ENCODE measurements at regions of chr1 and their contacts with region 1.

Region 1: DNA sequence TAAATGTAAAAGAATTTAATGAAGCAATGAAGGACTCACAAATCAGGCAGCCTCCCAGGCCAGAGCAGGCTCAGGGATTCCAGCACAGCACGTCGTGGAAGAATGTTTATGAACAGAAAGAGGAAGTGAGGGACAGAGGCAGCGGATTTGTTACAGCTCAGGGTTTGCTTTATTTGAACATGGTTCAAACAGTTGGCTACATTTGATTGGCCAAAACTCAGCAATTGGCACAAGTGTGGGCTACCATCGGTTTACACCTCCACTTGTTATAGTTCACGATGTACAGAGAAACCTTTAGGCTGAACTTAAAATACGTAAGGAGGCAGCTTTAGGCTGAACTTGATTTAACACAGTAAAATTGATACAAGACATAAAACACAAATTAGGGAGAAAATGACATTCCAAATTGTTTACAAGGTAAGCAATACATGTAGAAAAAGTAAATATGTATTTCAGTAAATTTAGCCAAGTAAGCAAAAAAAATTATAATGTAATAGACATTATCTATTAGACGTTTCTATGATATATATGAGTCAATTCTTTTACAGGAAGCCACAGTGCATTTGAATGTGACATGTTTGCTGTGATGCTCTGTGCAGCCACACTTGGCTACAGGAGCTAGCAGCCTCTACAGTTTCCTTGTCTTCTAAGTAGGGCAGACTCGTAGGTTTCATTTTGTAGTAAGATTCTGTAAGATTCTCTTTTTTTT is 126.5 kb downstream of the ADSS2 start:
- DNase-seq: peak; percentile 23
- H3K4me3 Mint-ChIP-seq: peak overlapping the region; percentile 68
- H3K27ac Mint-ChIP-seq: peak overlapping the region; percentile 92
- H3K4me1 Mint-ChIP-seq: peaks cover 62% of the 10 kb centered on the region
- H3K27me3 Mint-ChIP-seq: peaks cover 3% of the 10 kb centered on the region

Region 2: GRCh38 chr1:244280859-244281258 is 44.4 kb before region 1 on chr1:
- intact Hi-C with region 1: no loop called
- DNase-seq: no peak
- H3K4me3 Mint-ChIP-seq: no peak overlapping the region
- H3K27ac Mint-ChIP-seq: no peak overlapping the region
- H3K4me1 Mint-ChIP-seq: no peaks in the 10 kb centered on the region
- H3K27me3 Mint-ChIP-seq: peaks cover 7% of the 10 kb centered on the region

Region 3: DNA sequence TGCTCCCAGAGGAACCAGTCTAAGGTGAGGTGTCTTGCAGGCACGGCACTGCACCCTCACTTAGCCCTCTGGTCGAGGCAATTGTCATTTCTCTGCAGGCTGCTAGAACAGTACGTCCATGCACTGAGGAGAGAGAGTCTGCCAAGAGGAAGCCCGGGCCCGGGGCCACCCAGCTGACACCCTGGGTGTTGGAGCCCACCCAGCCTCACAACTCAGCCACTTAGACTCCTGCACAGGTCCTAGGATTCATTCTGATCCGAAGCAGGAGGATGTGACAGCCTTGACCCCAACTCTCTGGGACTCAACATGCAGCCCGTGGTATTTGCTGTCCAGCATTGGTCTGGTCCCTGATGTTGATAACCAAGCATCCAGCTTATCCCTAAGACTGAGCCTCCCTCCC is 14.6 kb after region 1 on chr1:
- intact Hi-C with region 1: loop called (anchors 2 kb)
- DNase-seq: no peak
- H3K4me3 Mint-ChIP-seq: no peak overlapping the region
- H3K27ac Mint-ChIP-seq: peak overlapping the region; percentile 7
- H3K4me1 Mint-ChIP-seq: peaks cover 9% of the 10 kb centered on the region
- H3K27me3 Mint-ChIP-seq: no peaks in the 10 kb centered on the region

Measured in activated T-helper 1 cell treated with anti-CD3 and anti-CD28 coated beads, Interleukin-12 subunit alpha, Interleukin-12 subunit beta, Interleukin-2, Interleukin-4 antibody, amounts not matched to agents 30 ng/mL and 10 ng/mL and 1 ng/mL, durations not matched to agents 14 hours and 24 hours and 36 hours (primary cell).